Caco-2 (cell line): ENCODE measurements at regions of chr19 and their contacts with region 1.

Region 1: GRCh38 chr19:46661020-46661731 is at the start of gene DACT3:
- DNase-seq: peak; percentile 100
- H3K4me3 ChIP-seq: peak within 1 kb of the TSS; percentile 54
- H3K4me3 Mint-ChIP-seq: peak within 1 kb of the TSS; percentile 73
- H3K27ac Mint-ChIP-seq: peak within 1 kb of the TSS; percentile 63
- H3K4me1 ChIP-seq: peaks cover 11% of the 10 kb centered on the region; the same call in 1 of the 2 replicates
- H3K4me1 Mint-ChIP-seq: peaks cover 14% of the 10 kb centered on the region
- H3K27me3 ChIP-seq: no peaks in the 10 kb centered on the region; the same call in 1 of the 2 replicates
- H3K27me3 Mint-ChIP-seq: peaks cover 15% of the 10 kb centered on the region
- CTCF ChIP-seq: no peak
- total RNA-seq, gene DACT3: 0.39 and 0.75 TPM in 2 replicates

Region 2: DNA sequence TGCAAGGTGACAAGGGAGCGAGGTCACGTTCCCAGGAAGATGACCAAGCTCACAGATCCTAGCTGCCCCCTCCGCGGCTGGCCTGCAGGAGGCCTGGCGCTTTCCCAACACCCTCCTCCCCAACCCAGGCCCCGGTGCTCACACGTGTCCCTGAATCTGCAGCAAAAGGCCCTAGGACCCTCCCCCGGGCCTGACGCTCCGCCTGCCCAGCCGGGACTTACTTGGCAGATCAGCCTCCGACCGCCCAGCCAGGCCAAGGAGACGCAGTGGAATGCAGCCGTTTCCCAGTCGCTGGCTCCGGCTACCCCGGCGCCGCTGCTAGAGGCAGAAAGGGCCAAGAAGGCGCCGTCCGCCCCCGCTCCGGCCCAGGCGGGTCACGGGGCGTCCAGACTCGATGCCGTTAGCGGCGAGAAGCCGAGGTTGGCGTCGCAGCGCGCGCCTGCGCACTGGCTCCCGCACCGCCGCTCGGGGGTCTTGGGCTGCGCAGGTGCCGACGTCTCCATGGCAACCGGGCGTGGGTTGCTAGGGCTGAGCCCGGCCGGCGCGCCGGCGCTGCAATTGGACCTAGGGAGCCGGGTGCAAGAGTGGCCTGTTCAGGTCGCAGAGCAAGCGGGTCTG is 190.0 kb before region 1 on chr19 and contains the start of gene PNMA8A:
- CTCF ChIA-PET with region 1: no interaction called
- POLR2A ChIA-PET with region 1: no interaction called
- intact Hi-C with region 1: no loop called
- DNase-seq: no peak
- H3K4me3 ChIP-seq: no peak within 1 kb of the TSS
- H3K4me3 Mint-ChIP-seq: no peak within 1 kb of the TSS
- H3K27ac Mint-ChIP-seq: no peak within 1 kb of the TSS
- H3K4me1 ChIP-seq: no peaks in the 10 kb centered on the region
- H3K4me1 Mint-ChIP-seq: no peaks in the 10 kb centered on the region
- H3K27me3 ChIP-seq: no peaks in the 10 kb centered on the region
- H3K27me3 Mint-ChIP-seq: no peaks in the 10 kb centered on the region
- CTCF ChIP-seq: no peak
- total RNA-seq, gene PNMA8A: not detected in 2 replicates

Region 3: DNA sequence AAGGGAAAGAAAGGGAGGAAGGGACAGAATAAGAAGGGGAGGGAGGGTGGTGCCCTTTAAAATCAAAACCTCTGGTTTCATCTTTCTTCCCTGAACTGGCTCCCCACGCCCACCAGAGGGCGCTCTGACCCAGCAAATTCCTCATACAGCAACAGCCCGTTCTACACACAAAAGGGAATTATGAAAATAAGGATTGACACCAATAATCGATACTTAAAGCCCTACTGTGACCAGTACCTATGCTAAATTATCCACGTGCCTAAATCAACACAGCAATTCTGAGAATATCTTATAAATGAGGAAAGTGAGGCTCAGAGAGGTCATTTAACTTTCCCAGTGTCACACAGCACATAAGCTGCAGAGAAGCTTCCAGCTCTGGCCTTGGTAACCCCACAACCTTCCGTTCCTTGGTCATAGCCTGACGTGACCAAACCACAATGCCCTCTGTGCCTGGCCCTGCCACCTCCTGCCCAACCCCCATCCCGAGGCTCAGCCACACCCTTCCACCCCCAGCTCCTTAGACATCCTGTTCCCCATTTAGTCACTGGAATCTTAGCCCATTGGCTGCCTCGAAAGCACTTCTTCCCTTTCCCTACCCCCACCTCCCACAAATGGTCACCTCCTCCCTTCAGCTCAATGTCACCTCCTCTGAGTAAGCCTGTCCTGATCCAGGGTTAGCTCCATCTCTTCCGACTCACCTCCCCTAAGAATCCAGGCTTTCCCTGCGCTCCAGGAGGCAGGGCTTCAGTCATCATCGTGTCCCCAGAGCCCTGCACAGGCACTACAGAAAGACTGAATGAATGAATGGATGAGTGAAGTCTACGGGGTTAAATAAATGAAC is 131.3 kb before region 1 on chr19:
- CTCF ChIA-PET with region 1: interaction called, 18 read pairs
- POLR2A ChIA-PET with region 1: no interaction called
- intact Hi-C with region 1: loop called (anchors 1 kb)
- DNase-seq: peak in 1 of 2 experiments; percentile 77
- H3K4me3 ChIP-seq: no peak overlapping the region
- H3K4me3 Mint-ChIP-seq: no peak overlapping the region
- H3K27ac Mint-ChIP-seq: no peak overlapping the region
- H3K4me1 ChIP-seq: no peaks in the 10 kb centered on the region
- H3K4me1 Mint-ChIP-seq: no peaks in the 10 kb centered on the region
- H3K27me3 ChIP-seq: no peaks in the 10 kb centered on the region
- H3K27me3 Mint-ChIP-seq: peaks cover 9% of the 10 kb centered on the region
- CTCF ChIP-seq: peak; percentile 94 to 97

Region 4: GRCh38 chr19:46542428-46543230 is 118.5 kb before region 1 on chr19:
- CTCF ChIA-PET with region 1: interaction called, 19 read pairs
- POLR2A ChIA-PET with region 1: no interaction called
- intact Hi-C with region 1: no loop called
- DNase-seq: peak; percentile 83 to 91
- H3K4me3 ChIP-seq: no peak overlapping the region
- H3K4me3 Mint-ChIP-seq: no peak overlapping the region
- H3K27ac Mint-ChIP-seq: no peak overlapping the region
- H3K4me1 ChIP-seq: peaks cover 8% of the 10 kb centered on the region
- H3K4me1 Mint-ChIP-seq: no peaks in the 10 kb centered on the region
- H3K27me3 ChIP-seq: no peaks in the 10 kb centered on the region
- H3K27me3 Mint-ChIP-seq: peaks cover 7% of the 10 kb centered on the region
- CTCF ChIP-seq: peak; percentile 75 to 94

Region 5: DNA sequence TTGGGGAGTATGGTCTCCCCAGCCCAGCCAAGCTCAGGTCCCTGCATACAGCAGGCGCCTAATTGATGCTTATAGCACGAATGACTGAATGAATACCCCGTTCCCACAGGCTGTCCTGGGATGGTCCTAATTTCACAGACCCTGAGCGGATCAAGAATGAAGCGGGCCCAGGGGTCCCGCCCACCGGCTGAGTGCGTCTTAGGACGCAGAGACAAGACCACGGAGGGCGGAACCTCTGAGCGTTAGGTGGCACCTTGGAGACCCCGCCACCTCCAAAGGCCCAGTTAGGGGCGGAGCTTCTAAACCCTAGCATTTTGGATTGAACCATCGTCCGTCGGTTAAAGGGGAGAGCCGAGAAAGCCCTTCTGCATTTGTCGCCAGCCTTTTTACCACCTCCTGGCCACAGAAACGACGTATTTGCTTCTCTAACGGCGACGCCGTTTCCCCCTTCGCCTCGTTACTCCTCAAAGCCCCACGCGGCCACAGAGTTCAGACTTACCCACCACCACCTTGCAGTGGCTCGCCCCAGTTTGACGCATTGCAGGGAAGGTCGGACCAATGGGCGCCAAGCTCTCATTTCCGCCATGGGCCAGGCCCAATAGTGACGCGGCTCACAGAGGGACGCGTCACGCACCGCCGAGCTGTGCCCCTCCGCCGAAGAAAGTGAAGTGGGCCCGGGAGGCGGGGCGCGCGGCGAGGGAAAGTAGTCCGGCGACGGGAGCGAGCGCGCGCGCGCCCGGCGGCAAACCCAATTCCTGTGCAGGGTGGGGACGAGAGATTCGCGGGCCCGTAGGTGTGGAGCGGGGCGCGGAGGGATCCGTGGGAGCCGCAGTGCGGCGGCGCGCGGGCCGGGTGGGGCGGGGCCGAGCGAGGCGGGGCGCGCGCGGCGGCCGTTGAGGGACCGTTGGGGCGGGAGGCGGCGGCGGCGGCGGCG is 60.5 kb before region 1 on chr19:
- CTCF ChIA-PET with region 1: interaction called, 12 read pairs
- POLR2A ChIA-PET with region 1: interaction called, 8 read pairs
- intact Hi-C with region 1: no loop called
- DNase-seq: peak; percentile 96 to 98
- H3K4me3 ChIP-seq: peak overlapping the region; percentile 98
- H3K4me3 Mint-ChIP-seq: peak overlapping the region; percentile 94
- H3K27ac Mint-ChIP-seq: peak overlapping the region; percentile 100
- H3K4me1 ChIP-seq: peaks cover 14% of the 10 kb centered on the region
- H3K4me1 Mint-ChIP-seq: no peaks in the 10 kb centered on the region
- H3K27me3 ChIP-seq: no peaks in the 10 kb centered on the region; the same call in 1 of the 2 replicates
- H3K27me3 Mint-ChIP-seq: no peaks in the 10 kb centered on the region
- CTCF ChIP-seq: no peak

Region 6: GRCh38 chr19:46614114-46614722 is 47.0 kb before region 1 on chr19:
- CTCF ChIA-PET with region 1: interaction called, 117 read pairs
- POLR2A ChIA-PET with region 1: interaction called, 15 read pairs
- intact Hi-C with region 1: loop called (anchors 1 kb)
- DNase-seq: peak; percentile 87 to 90
- H3K4me3 ChIP-seq: no peak overlapping the region
- H3K4me3 Mint-ChIP-seq: no peak overlapping the region
- H3K27ac Mint-ChIP-seq: no peak overlapping the region
- H3K4me1 ChIP-seq: no peaks in the 10 kb centered on the region
- H3K4me1 Mint-ChIP-seq: peaks cover 6% of the 10 kb centered on the region
- H3K27me3 ChIP-seq: no peaks in the 10 kb centered on the region
- H3K27me3 Mint-ChIP-seq: no peaks in the 10 kb centered on the region
- CTCF ChIP-seq: peak; percentile 93 to 95

Region 7: GRCh38 chr19:46634045-46634655 is 27.0 kb before region 1 on chr19:
- CTCF ChIA-PET with region 1: interaction called, 15 read pairs
- POLR2A ChIA-PET with region 1: interaction called, 6 read pairs
- intact Hi-C with region 1: loop called (anchors 1 kb)
- DNase-seq: peak; percentile 96 to 97
- H3K4me3 ChIP-seq: peak overlapping the region; percentile 34
- H3K4me3 Mint-ChIP-seq: peak overlapping the region; percentile 66
- H3K27ac Mint-ChIP-seq: peak overlapping the region; percentile 49
- H3K4me1 ChIP-seq: peaks cover 9% of the 10 kb centered on the region
- H3K4me1 Mint-ChIP-seq: peaks cover 8% of the 10 kb centered on the region
- H3K27me3 ChIP-seq: no peaks in the 10 kb centered on the region; the same call in 1 of the 2 replicates
- H3K27me3 Mint-ChIP-seq: peaks cover 12% of the 10 kb centered on the region
- CTCF ChIP-seq: no peak

Region 8: GRCh38 chr19:46648060-46648960 is 12.9 kb before region 1 on chr19:
- CTCF ChIA-PET with region 1: interaction called, 12 read pairs
- POLR2A ChIA-PET with region 1: no interaction called
- intact Hi-C with region 1: no loop called
- DNase-seq: no peak
- H3K4me3 ChIP-seq: no peak overlapping the region
- H3K4me3 Mint-ChIP-seq: no peak overlapping the region
- H3K27ac Mint-ChIP-seq: no peak overlapping the region
- H3K4me1 ChIP-seq: no peaks in the 10 kb centered on the region
- H3K4me1 Mint-ChIP-seq: no peaks in the 10 kb centered on the region
- H3K27me3 ChIP-seq: no peaks in the 10 kb centered on the region
- H3K27me3 Mint-ChIP-seq: no peaks in the 10 kb centered on the region
- CTCF ChIP-seq: no peak